ENCODE measurements at regions of chr5 and their contacts with region 1.

Region 1: DNA sequence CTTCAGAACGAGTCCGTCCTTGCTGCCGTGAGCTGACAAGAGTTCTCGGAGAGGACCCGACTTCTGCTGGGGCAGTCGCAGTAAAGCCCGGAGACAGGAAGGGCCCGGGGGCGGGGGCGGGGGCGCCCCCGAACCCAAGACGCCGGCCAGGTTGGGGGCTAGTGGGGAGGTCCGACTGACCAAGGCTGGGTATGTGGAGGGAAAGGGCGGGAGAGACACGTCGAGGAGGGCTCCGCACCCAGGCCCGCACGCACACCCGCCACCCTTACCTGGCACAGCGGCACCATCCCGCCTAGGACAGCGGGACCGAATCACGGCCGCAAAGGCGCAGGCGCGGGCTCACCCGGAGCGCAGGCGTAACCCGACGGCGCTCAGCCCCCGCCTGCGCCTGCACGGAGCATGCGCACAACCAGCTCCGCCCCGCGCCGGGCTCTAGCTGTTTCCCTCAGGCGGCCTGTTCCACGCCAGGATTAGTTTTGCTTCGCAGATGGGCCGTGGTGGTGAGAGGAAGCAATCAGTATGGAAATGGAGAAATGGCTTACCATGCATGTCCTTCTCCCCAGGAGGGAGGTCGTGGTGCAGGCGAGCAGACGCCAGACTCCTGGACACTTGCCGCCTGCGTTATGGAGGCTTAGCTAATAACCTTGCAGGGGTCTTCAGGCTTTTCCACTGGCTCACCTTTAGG is at the start of gene MOCS2:
- DNase-seq: peak; percentile 87 to 93 (median 90)
- H3K4me3 ChIP-seq: peak within 1 kb of the TSS; percentile 74
- H3K4me3 Mint-ChIP-seq: peak within 1 kb of the TSS; percentile 92 to 98 (median 93)
- H3K27ac ChIP-seq: peak within 1 kb of the TSS; percentile 45
- H3K27ac Mint-ChIP-seq: peak within 1 kb of the TSS; percentile 88 to 96 (median 94)
- H3K4me1 ChIP-seq: peaks cover 30% of the 10 kb centered on the region
- H3K4me1 Mint-ChIP-seq: peaks cover 52 to 61% (median 61%) of the 10 kb centered on the region in 3 donors
- H3K27me3 ChIP-seq: no peaks in the 10 kb centered on the region
- H3K27me3 Mint-ChIP-seq: no peaks in the 10 kb centered on the region
- total RNA-seq, gene MOCS2: 25.9 to 27.0 TPM

Region 2: DNA sequence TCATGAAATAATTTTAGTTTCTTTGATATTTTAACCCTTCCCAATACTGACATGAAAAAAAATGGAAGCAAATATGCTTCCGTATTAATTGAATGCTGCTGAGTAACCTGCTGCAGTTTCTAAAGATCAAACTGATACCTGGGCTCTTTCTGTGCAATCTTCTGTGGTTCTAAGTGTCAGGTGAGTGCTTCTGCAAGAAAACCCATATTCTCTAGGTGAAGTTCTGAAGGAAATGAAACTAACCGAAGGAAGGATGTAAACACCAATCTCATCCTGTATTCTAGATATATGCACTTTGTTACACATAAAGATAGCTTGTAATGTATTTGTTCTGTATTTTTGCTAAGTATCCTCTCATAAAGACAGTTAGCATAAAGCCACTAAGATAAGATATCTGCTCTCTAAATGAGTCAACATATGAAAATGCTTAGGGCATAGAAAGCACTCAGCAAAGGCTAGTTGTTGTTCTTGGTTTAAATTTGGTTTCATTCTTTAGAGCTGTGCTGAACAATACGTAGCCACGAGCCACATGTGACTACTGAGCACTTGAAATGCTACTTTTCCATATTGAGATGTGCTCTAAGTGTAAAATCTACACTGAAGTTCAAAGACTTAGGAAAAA is 68.4 kb before region 1 on chr5:
- CTCF ChIA-PET with region 1: no interaction called
- POLR2A ChIA-PET with region 1: interaction called, 11 read pairs
- DNase-seq: peak in 1 of 5 donors; percentile 10
- H3K4me3 ChIP-seq: peak overlapping the region; percentile 37
- H3K4me3 Mint-ChIP-seq: peak overlapping the region; percentile 37 to 83 (median 81)
- H3K27ac ChIP-seq: no peak overlapping the region
- H3K27ac Mint-ChIP-seq: peak overlapping the region in 7 of 8 donors; percentile 1 to 88 (median 63)
- H3K4me1 ChIP-seq: peaks cover 11% of the 10 kb centered on the region
- H3K4me1 Mint-ChIP-seq: peaks cover 20 to 37% (median 26%) of the 10 kb centered on the region in 3 donors
- H3K27me3 ChIP-seq: no peaks in the 10 kb centered on the region
- H3K27me3 Mint-ChIP-seq: peaks cover 0 to 2% of the 10 kb centered on the region in 2 donors